WTC11 (cell line): ENCODE measurements at regions of chr15 and their contacts with region 1.

Region 1: DNA sequence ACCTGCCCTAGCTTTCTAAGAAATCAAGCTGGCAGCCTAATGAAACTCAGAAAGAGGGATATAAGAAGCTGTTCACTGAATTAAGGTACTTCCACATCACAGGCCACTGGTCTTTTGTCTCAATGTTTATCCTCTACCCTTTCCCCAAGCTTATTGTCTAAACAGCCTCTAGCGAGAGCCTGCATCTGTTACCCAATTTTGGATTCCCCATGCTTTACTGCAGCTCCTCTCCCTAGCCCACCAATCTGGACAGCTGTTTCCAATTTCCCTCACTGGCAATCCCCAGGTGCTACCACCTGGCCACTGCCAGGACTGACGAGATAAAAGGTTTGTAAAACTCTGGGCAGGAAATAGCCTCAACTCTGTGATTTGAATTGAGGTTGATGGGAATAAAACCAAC is 58.1 kb upstream of the TEX9 start:
- DNase-seq: no peak
- ATAC-seq: peak; percentile 67
- H3K4me3 Mint-ChIP-seq: no peak overlapping the region
- H3K27ac Mint-ChIP-seq: no peak overlapping the region
- H3K4me1 Mint-ChIP-seq: peaks cover 23% of the 10 kb centered on the region
- H3K27me3 Mint-ChIP-seq: no peaks in the 10 kb centered on the region
- CTCF ChIP-seq: no peak

Region 2: DNA sequence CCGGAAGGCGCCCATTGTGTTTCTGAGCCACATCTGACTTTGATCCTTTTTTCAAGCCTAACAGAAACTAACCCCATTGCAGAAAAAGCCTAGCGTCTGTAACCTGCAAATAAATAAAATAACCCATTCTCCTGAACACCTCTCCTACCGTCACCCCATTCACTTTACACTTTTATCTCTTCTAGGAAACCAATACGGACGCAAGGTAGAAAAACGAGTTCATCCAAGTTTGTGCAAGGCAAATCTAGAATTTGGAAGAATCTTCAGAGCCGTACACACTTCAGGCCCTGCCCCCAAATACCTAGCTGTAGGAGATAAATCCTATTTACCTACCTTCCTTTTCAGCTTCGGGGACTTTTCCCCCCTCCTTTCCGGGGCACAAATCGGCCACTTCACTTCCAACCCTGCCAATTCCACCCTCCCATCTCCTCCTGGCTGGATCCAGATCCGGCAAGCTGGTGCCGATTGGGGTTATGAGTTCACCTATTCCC is 565.2 kb before region 1 on chr15:
- CTCF ChIA-PET with region 1: no interaction called
- POLR2A ChIA-PET with region 1: no interaction called
- DNase-seq: peak; percentile 32
- ATAC-seq: peak; percentile 4; the same call in 1 of the 2 replicates
- H3K4me3 Mint-ChIP-seq: no peak overlapping the region
- H3K27ac Mint-ChIP-seq: no peak overlapping the region
- H3K4me1 Mint-ChIP-seq: peaks cover 4% of the 10 kb centered on the region
- H3K27me3 Mint-ChIP-seq: peaks cover 49% of the 10 kb centered on the region
- CTCF ChIP-seq: no peak

Region 3: GRCh38 chr15:56295433-56295832 is 11.7 kb before region 1 on chr15:
- CTCF ChIA-PET with region 1: interaction called, 13 read pairs
- POLR2A ChIA-PET with region 1: no interaction called
- DNase-seq: no peak
- ATAC-seq: peak; percentile 38
- H3K4me3 Mint-ChIP-seq: no peak overlapping the region
- H3K27ac Mint-ChIP-seq: no peak overlapping the region
- H3K4me1 Mint-ChIP-seq: peaks cover 4% of the 10 kb centered on the region
- H3K27me3 Mint-ChIP-seq: no peaks in the 10 kb centered on the region
- CTCF ChIP-seq: no peak